K562 (cell line): ENCODE measurements at regions of chr19 and their contacts with region 1.

Region 1: GRCh38 chr19:51158474-51159129 is 16.5 kb downstream of the SIGLEC7 start:
- DNase-seq: peak; percentile 73 to 85 (median 78)
- ATAC-seq: peak; percentile 96
- H3K4me3 ChIP-seq: no peak overlapping the region
- H3K27ac ChIP-seq: peak overlapping the region; percentile 34; the same call in 1 of the 3 replicates
- H3K4me1 ChIP-seq: peaks cover 0 to 9% of the 10 kb centered on the region in 2 experiments; a peak in 2 of 5 replicates
- H3K27me3 ChIP-seq: peaks cover 3 to 18% of the 10 kb centered on the region in 2 experiments; a peak in 3 of 5 replicates
- CTCF ChIP-seq: peak; percentile 84 to 91 (median 89)
- EP300 ChIP-seq: no peak
- POLR2A ChIP-seq: no peak
- RAD21 ChIP-seq: peak; percentile 82 to 86

Region 2: GRCh38 chr19:51026554-51026831 is 132.1 kb before region 1 on chr19 and contains the start of gene KLK11:
- CTCF ChIA-PET with region 1: no interaction called
- POLR2A ChIA-PET with region 1: no interaction called
- in situ Hi-C with region 1: no loop called
- intact Hi-C with region 1: no loop called
- DNase-seq: no peak
- ATAC-seq: no peak
- H3K4me3 ChIP-seq: no peak within 1 kb of the TSS
- H3K27ac ChIP-seq: no peak within 1 kb of the TSS
- H3K4me1 ChIP-seq: peaks cover 0 to 7% of the 10 kb centered on the region in 2 experiments; a peak in 2 of 5 replicates
- H3K27me3 ChIP-seq: peaks cover 25 to 68% of the 10 kb centered on the region in 2 experiments
- CTCF ChIP-seq: no peak
- EP300 ChIP-seq: no peak
- POLR2A ChIP-seq: no peak
- RAD21 ChIP-seq: no peak
- polyA plus RNA-seq, gene KLK11: not detected

Region 3: DNA sequence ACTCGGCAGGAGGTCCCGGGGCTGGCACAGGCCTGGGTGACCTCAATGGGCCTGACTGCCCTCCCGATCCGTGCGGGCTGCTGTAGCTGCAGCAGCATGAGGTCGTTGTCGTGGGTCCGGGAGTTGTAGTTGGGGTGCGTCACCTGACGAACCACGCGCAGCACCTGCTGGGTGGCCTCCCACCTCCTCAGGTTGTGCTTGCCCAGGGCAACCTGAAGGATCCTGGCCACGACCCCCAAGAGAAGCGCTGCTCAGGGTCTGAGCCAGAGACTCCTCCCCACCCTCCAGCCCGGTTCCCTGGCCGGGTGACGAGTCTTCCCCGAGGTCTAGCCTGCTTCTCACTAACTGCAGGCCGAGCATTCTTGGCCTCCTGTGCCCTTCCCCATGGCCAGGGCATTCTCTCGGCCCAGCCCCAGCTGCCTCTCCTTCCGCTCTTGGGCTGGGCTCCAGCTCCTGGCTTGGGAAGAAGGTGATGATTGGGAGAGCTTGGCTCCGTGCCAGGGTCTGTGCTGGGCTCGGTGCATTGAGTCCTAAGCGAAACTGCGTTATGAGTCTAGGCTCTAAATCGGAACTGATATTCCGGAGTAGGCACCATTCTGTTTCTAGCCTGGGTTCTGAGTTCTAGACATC is 79.0 kb before region 1 on chr19:
- CTCF ChIA-PET with region 1: no interaction called
- POLR2A ChIA-PET with region 1: no interaction called
- in situ Hi-C with region 1: no loop called
- intact Hi-C with region 1: no loop called
- DNase-seq: no peak
- ATAC-seq: no peak
- H3K4me3 ChIP-seq: no peak overlapping the region
- H3K27ac ChIP-seq: no peak overlapping the region
- H3K4me1 ChIP-seq: peaks cover 0 to 7% of the 10 kb centered on the region in 2 experiments; a peak in 2 of 5 replicates
- H3K27me3 ChIP-seq: peaks cover 16 to 67% of the 10 kb centered on the region in 2 experiments; a peak in 4 of 5 replicates
- CTCF ChIP-seq: no peak
- EP300 ChIP-seq: no peak
- POLR2A ChIP-seq: no peak
- RAD21 ChIP-seq: no peak

Region 4: GRCh38 chr19:51168564-51169282 is 10.1 kb after region 1 on chr19:
- CTCF ChIA-PET with region 1: interaction called, 13 read pairs
- POLR2A ChIA-PET with region 1: interaction called, 3 read pairs
- in situ Hi-C with region 1: no loop called
- intact Hi-C with region 1: loop called (anchors 1 kb)
- DNase-seq: no peak
- ATAC-seq: no peak
- H3K4me3 ChIP-seq: no peak overlapping the region
- H3K27ac ChIP-seq: no peak overlapping the region
- H3K4me1 ChIP-seq: peaks cover 0 to 12% of the 10 kb centered on the region in 2 experiments; a peak in 4 of 5 replicates
- H3K27me3 ChIP-seq: peaks cover 6 to 15% of the 10 kb centered on the region in 2 experiments; a peak in 4 of 5 replicates
- CTCF ChIP-seq: no peak
- EP300 ChIP-seq: no peak
- POLR2A ChIP-seq: no peak
- RAD21 ChIP-seq: no peak

Region 5: GRCh38 chr19:51259348-51260245 is 101.0 kb after region 1 on chr19:
- CTCF ChIA-PET with region 1: interaction called, 34 read pairs
- POLR2A ChIA-PET with region 1: no interaction called
- in situ Hi-C with region 1: loop called (anchors 5 kb)
- intact Hi-C with region 1: loop called (anchors 1 kb)
- DNase-seq: peak; percentile 48 to 74 (median 60)
- ATAC-seq: peak; percentile 83
- H3K4me3 ChIP-seq: no peak overlapping the region
- H3K27ac ChIP-seq: no peak overlapping the region
- H3K4me1 ChIP-seq: peaks cover 4 to 12% of the 10 kb centered on the region in 2 experiments; a peak in 3 of 5 replicates
- H3K27me3 ChIP-seq: peaks cover 14 to 18% of the 10 kb centered on the region in 2 experiments; a peak in 4 of 5 replicates
- CTCF ChIP-seq: peak; percentile 87 to 96 (median 91)
- EP300 ChIP-seq: no peak
- POLR2A ChIP-seq: no peak
- RAD21 ChIP-seq: peak; percentile 88 to 96

Region 6: GRCh38 chr19:51651216-51651846 is 492.7 kb after region 1 on chr19:
- CTCF ChIA-PET with region 1: interaction called, 3 read pairs
- POLR2A ChIA-PET with region 1: no interaction called
- in situ Hi-C with region 1: loop called (anchors 25 kb)
- intact Hi-C with region 1: loop called (anchors 10 kb)
- DNase-seq: peak in 1 of 4 experiments; percentile 17
- ATAC-seq: no peak
- H3K4me3 ChIP-seq: no peak overlapping the region
- H3K27ac ChIP-seq: no peak overlapping the region
- H3K4me1 ChIP-seq: peaks cover 0 to 7% of the 10 kb centered on the region in 2 experiments; a peak in 3 of 5 replicates
- H3K27me3 ChIP-seq: peaks cover 9 to 20% of the 10 kb centered on the region in 2 experiments; a peak in 3 of 5 replicates
- CTCF ChIP-seq: no peak
- EP300 ChIP-seq: no peak
- POLR2A ChIP-seq: no peak
- RAD21 ChIP-seq: no peak